ENCODE measurements at regions of chr19 and their contacts with region 1.

Region 1: DNA sequence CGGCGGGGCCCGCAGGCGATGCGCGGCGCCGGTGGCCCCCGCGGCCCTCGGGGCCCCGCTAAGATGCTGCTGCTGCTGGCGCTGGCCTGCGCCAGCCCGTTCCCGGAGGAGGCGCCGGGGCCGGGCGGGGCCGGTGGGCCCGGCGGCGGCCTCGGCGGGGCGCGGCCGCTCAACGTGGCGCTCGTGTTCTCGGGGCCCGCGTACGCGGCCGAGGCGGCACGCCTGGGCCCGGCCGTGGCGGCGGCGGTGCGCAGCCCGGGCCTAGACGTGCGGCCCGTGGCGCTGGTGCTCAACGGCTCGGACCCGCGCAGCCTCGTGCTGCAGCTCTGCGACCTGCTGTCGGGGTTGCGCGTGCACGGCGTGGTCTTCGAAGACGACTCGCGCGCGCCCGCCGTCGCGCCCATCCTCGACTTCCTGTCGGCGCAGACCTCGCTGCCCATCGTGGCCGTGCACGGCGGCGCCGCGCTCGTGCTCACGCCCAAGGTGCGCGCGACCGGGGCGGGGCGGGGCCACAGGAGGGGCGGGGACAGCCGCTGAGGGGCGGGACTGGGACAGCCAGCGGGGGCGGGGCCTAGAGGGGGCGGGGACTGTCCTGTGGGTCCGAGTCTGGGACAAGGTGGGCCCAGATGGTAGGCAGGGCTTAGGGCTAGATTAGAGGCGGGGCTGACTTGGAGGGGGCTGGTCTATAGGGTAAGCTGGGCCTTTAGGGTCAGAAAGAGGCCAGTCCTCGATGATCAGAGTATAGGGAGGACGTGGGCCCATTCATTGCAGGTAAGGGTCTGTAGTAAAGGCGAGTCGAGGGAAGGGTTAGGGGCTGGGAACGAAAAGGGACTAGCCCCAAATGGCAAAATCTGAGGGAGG is 5.1 kb downstream of the GRIN2D start:
- DNase-seq: peak; percentile 73 to 94 (median 86)
- ATAC-seq: peak; percentile 77
- H3K4me3 ChIP-seq: peak overlapping the region; percentile 45 to 47
- H3K4me3 Mint-ChIP-seq: peak overlapping the region; percentile 63
- H3K27ac ChIP-seq: peak overlapping the region in 1 of 2 experiments; percentile 35
- H3K27ac Mint-ChIP-seq: no peak overlapping the region
- H3K4me1 ChIP-seq: peaks cover 42% of the 10 kb centered on the region
- H3K4me1 Mint-ChIP-seq: peaks cover 36% of the 10 kb centered on the region
- H3K27me3 ChIP-seq: peaks cover 20 to 32% of the 10 kb centered on the region in 2 experiments
- H3K27me3 Mint-ChIP-seq: peaks cover 22% of the 10 kb centered on the region
- CTCF ChIP-seq: no peak

Region 2: GRCh38 chr19:48249502-48250014 is 149.0 kb before region 1 on chr19:
- CTCF ChIA-PET with region 1: no interaction called
- POLR2A ChIA-PET with region 1: no interaction called
- intact Hi-C with region 1: loop called in 1 of 2 experiments (anchors 5 kb)
- DNase-seq: peak; percentile 30 to 90 (median 77)
- ATAC-seq: peak; percentile 85
- H3K4me3 ChIP-seq: peak overlapping the region; percentile 63 to 76
- H3K4me3 Mint-ChIP-seq: peak overlapping the region; percentile 93
- H3K27ac ChIP-seq: peak overlapping the region; percentile 89 to 98
- H3K27ac Mint-ChIP-seq: peak overlapping the region; percentile 99
- H3K4me1 ChIP-seq: peaks cover 85% of the 10 kb centered on the region
- H3K4me1 Mint-ChIP-seq: peaks cover 81% of the 10 kb centered on the region
- H3K27me3 ChIP-seq: no peaks in the 10 kb centered on the region
- H3K27me3 Mint-ChIP-seq: no peaks in the 10 kb centered on the region
- CTCF ChIP-seq: no peak

Region 3: GRCh38 chr19:48419158-48419920 is 20.7 kb after region 1 on chr19:
- CTCF ChIA-PET with region 1: interaction called, 3 read pairs
- POLR2A ChIA-PET with region 1: interaction called, 4 read pairs
- intact Hi-C with region 1: loop called in 1 of 2 experiments (anchors 2 kb)
- DNase-seq: peak; percentile 43 to 87 (median 72)
- ATAC-seq: peak; percentile 64
- H3K4me3 ChIP-seq: peak overlapping the region in 1 of 2 experiments; percentile 34
- H3K4me3 Mint-ChIP-seq: peak overlapping the region; percentile 77
- H3K27ac ChIP-seq: no peak overlapping the region
- H3K27ac Mint-ChIP-seq: no peak overlapping the region
- H3K4me1 ChIP-seq: peaks cover 16% of the 10 kb centered on the region
- H3K4me1 Mint-ChIP-seq: peaks cover 19% of the 10 kb centered on the region
- H3K27me3 ChIP-seq: peaks cover 0 to 2% of the 10 kb centered on the region in 2 experiments
- H3K27me3 Mint-ChIP-seq: peaks cover 25% of the 10 kb centered on the region
- CTCF ChIP-seq: no peak

Region 4: DNA sequence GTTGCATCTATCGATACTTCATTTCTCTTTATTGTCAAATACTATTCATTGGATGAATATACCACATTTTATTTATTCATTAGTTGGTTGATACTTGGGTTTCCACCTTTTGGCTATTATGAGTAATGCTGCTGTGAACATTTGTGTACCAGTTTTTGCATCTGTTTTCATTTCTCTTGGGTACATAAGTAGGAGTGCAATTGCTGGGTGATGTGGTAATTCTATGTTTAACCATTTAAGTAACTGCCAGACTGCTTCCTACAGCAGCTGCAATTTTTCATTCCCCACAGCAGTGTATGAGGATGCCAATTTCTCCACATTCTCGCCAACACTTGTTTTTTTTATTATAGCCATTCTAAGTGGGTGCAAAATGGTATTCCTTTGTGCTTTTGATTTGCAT is 59.4 kb after region 1 on chr19:
- CTCF ChIA-PET with region 1: no interaction called
- POLR2A ChIA-PET with region 1: no interaction called
- intact Hi-C with region 1: no loop called
- DNase-seq: no peak
- ATAC-seq: no peak
- H3K4me3 ChIP-seq: no peak overlapping the region
- H3K4me3 Mint-ChIP-seq: no peak overlapping the region
- H3K27ac ChIP-seq: no peak overlapping the region
- H3K27ac Mint-ChIP-seq: no peak overlapping the region
- H3K4me1 ChIP-seq: no peaks in the 10 kb centered on the region
- H3K4me1 Mint-ChIP-seq: peaks cover 7% of the 10 kb centered on the region
- H3K27me3 ChIP-seq: no peaks in the 10 kb centered on the region
- H3K27me3 Mint-ChIP-seq: no peaks in the 10 kb centered on the region
- CTCF ChIP-seq: no peak

Region 5: GRCh38 chr19:48468775-48469288 is 70.2 kb after region 1 on chr19:
- CTCF ChIA-PET with region 1: no interaction called
- POLR2A ChIA-PET with region 1: no interaction called
- intact Hi-C with region 1: loop called in 1 of 2 experiments (anchors 2 kb)
- DNase-seq: peak; percentile 98 to 100 (median 99)
- ATAC-seq: peak; percentile 85
- H3K4me3 ChIP-seq: peak overlapping the region; percentile 83 to 95
- H3K4me3 Mint-ChIP-seq: peak overlapping the region; percentile 90
- H3K27ac ChIP-seq: peak overlapping the region; percentile 75 to 90
- H3K27ac Mint-ChIP-seq: peak overlapping the region; percentile 85
- H3K4me1 ChIP-seq: peaks cover 15% of the 10 kb centered on the region
- H3K4me1 Mint-ChIP-seq: peaks cover 21% of the 10 kb centered on the region
- H3K27me3 ChIP-seq: no peaks in the 10 kb centered on the region
- H3K27me3 Mint-ChIP-seq: no peaks in the 10 kb centered on the region
- CTCF ChIP-seq: no peak

Region 6: GRCh38 chr19:48530066-48530720 is 131.6 kb after region 1 on chr19:
- CTCF ChIA-PET with region 1: no interaction called
- POLR2A ChIA-PET with region 1: no interaction called
- intact Hi-C with region 1: no loop called
- DNase-seq: no peak
- ATAC-seq: no peak
- H3K4me3 ChIP-seq: no peak overlapping the region
- H3K4me3 Mint-ChIP-seq: no peak overlapping the region
- H3K27ac ChIP-seq: no peak overlapping the region
- H3K27ac Mint-ChIP-seq: no peak overlapping the region
- H3K4me1 ChIP-seq: no peaks in the 10 kb centered on the region
- H3K4me1 Mint-ChIP-seq: no peaks in the 10 kb centered on the region
- H3K27me3 ChIP-seq: no peaks in the 10 kb centered on the region
- H3K27me3 Mint-ChIP-seq: peaks cover 3% of the 10 kb centered on the region
- CTCF ChIP-seq: no peak